Naive thymus-derived CD4-positive, alpha-beta T cell (primary cell): ENCODE measurements at regions of chr12 and their contacts with region 1.

Region 1: DNA sequence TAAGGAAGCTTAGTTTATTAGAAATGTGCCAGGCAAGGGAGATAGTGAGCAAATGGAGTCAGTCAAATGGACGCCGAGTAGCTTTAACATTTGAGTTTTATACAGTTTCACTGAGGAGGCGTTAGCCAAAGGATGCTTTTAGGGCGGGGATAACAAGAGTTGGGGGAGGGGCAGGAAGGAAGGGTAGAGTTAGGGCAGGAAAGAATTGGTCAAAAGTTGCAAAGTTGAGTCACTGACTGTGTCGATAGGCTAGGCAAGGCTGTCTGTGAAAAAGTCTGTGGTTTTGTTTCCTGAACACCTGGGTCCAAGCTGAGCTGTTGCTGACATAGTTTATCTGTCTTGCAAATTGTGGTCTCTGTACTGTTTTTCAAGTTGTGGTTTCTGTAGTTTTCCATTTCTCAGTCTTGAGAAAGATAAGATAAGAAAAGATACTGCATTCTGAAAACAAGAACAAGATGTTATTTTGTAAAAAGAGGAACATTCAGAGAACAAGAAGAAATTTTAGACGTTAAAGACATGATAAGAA is 62.6 kb upstream of the RESF1 start:
- DNase-seq: peak; percentile 35 to 96 (median 92)
- ATAC-seq: peak; percentile 97
- H3K4me3 ChIP-seq: no peak overlapping the region
- H3K4me3 Mint-ChIP-seq: peak overlapping the region; percentile 36 to 92 (median 76)
- H3K27ac ChIP-seq: peak overlapping the region; percentile 86
- H3K27ac Mint-ChIP-seq: peak overlapping the region; percentile 92 to 99 (median 97)
- H3K4me1 ChIP-seq: peaks cover 61% of the 10 kb centered on the region in 2 donors
- H3K4me1 Mint-ChIP-seq: peaks cover 33 to 74% (median 51%) of the 10 kb centered on the region in 7 donors
- H3K27me3 ChIP-seq: no peaks in the 10 kb centered on the region
- H3K27me3 Mint-ChIP-seq: peaks cover 0 to 6% (median 0%) of the 10 kb centered on the region in 5 donors

Region 2: DNA sequence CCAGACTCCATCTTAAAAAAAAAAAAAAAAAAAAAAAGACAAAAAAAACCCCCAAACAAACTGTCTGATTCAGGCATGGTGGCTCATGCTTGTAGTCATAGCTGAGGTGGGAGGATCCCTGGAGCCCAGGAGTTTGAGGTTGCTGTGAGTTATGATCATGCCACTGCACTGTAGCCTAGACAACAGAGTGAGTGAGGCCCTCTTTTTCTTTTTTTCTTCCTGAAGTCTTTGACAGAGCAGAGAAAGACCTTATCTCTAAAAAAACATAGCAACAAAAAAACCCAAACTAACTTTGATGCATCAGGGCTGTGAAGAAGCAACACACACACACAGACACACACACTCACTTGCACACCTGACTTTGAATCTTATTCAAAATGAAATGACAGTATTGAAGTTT is 160.1 kb before region 1 on chr12:
- CTCF ChIA-PET with region 1: no interaction called
- POLR2A ChIA-PET with region 1: interaction called, 4 read pairs
- intact Hi-C with region 1: loop called (anchors 1 kb)
- DNase-seq: peak in 8 of 9 donors; percentile 50 to 92 (median 85)
- ATAC-seq: peak; percentile 96
- H3K4me3 ChIP-seq: no peak overlapping the region
- H3K4me3 Mint-ChIP-seq: peak overlapping the region; percentile 34 to 78 (median 42)
- H3K27ac ChIP-seq: peak overlapping the region; percentile 63
- H3K27ac Mint-ChIP-seq: peak overlapping the region; percentile 78 to 97 (median 91)
- H3K4me1 ChIP-seq: peaks cover 4 to 27% of the 10 kb centered on the region in 2 donors
- H3K4me1 Mint-ChIP-seq: peaks cover 19 to 81% (median 67%) of the 10 kb centered on the region in 7 donors
- H3K27me3 ChIP-seq: no peaks in the 10 kb centered on the region
- H3K27me3 Mint-ChIP-seq: no peaks in the 10 kb centered on the region

Region 3: DNA sequence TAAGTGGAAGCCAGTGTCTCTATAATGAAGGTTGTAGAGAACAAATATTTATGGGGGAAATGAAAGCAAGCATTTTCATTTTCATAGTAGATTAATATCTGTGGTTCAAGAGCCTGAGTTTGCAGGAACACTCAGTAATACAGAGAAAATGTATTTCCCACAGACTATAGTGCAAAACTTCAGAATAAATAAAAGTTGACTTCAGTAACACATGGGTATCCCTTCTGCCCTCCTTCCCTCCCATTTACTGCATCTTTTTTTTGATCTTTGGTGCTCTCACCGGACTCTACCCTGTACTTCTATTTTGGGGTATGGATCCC is 92.4 kb before region 1 on chr12:
- CTCF ChIA-PET with region 1: no interaction called
- POLR2A ChIA-PET with region 1: interaction called, 5 read pairs
- intact Hi-C with region 1: loop called in 1 of 2 experiments (anchors 5 kb)
- DNase-seq: no peak
- ATAC-seq: no peak
- H3K4me3 ChIP-seq: peak overlapping the region; percentile 32
- H3K4me3 Mint-ChIP-seq: peak overlapping the region; percentile 33 to 91 (median 82)
- H3K27ac ChIP-seq: no peak overlapping the region
- H3K27ac Mint-ChIP-seq: peak overlapping the region; percentile 58 to 95 (median 88)
- H3K4me1 ChIP-seq: peaks cover 0 to 41% of the 10 kb centered on the region in 2 donors
- H3K4me1 Mint-ChIP-seq: peaks cover 26 to 67% (median 61%) of the 10 kb centered on the region in 7 donors
- H3K27me3 ChIP-seq: no peaks in the 10 kb centered on the region
- H3K27me3 Mint-ChIP-seq: no peaks in the 10 kb centered on the region

Region 4: DNA sequence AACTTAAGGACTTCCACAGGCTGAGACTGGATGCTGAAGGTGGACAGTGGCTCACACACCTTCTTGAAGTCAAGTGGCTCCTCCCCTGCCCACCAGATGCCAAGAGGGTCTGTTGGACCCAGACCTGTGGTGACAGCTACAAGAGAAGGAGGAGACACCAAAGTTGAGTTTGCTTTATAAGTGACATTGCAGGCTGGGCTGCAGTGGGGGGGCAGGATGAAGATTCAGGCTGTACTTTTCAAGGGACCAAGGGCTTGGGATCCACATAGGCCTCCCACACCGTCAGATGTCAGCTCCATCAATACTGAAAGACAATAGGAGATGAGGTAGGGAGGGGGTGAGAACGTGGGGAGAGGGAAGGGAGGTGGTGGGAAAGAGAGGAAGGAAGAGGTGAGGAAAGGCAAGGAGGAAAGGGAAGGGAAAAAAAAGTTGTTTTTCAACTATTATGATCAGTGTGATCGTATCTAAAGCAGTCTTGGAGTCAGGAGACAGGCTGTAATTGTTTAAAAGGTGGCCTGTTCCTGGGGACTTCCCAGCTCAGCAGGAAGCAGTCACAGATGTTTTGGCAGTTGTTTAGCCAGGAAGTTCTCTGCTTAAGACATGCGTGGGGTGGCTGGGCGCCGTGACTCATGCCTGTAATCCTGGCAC is 21.5 kb before region 1 on chr12:
- CTCF ChIA-PET with region 1: interaction called, 3 read pairs
- POLR2A ChIA-PET with region 1: interaction called, 22 read pairs
- intact Hi-C with region 1: loop called (anchors 1 kb)
- DNase-seq: peak; percentile 17 to 84 (median 63)
- ATAC-seq: peak; percentile 96
- H3K4me3 ChIP-seq: no peak overlapping the region
- H3K4me3 Mint-ChIP-seq: peak overlapping the region; percentile 53 to 84 (median 72)
- H3K27ac ChIP-seq: peak overlapping the region; percentile 90
- H3K27ac Mint-ChIP-seq: peak overlapping the region; percentile 95 to 100 (median 98)
- H3K4me1 ChIP-seq: peaks cover 12 to 29% of the 10 kb centered on the region in 2 donors
- H3K4me1 Mint-ChIP-seq: peaks cover 29 to 66% (median 55%) of the 10 kb centered on the region in 7 donors
- H3K27me3 ChIP-seq: no peaks in the 10 kb centered on the region
- H3K27me3 Mint-ChIP-seq: no peaks in the 10 kb centered on the region

Region 5: DNA sequence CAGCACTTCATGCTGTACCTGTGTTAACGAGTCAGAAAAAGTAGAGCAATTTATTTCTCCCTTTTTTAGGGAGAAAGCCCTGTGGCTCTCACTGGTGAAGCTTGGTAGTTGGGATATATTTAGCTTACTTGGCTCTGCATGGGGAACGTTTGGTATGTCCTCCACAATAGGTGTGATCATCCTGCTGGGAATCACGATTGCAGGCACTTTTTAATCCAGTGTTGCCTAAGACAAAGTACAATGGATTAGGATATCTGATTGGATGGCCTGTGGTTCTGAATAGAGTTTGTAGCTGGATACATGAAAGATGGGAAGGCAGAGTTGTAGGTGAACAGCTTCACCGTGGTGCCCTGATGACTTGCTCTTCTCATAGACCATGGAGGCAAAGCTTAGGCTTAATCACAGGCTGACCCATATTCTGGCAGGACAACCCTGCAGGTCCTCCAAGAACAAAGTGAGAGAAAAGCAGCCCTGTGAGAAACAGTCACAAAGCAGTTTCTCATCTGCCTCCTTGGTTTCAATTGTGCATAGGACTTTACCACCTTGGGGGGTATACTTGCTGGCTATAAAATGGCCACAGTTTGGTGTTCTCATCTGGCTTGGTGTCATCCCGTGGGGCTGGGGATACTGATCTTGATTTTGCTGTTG is 70.1 kb after region 1 on chr12:
- CTCF ChIA-PET with region 1: interaction called, 7 read pairs
- POLR2A ChIA-PET with region 1: interaction called, 103 read pairs
- intact Hi-C with region 1: no loop called
- DNase-seq: no peak
- ATAC-seq: peak; percentile 17
- H3K4me3 ChIP-seq: peak overlapping the region; percentile 35
- H3K4me3 Mint-ChIP-seq: peak overlapping the region; percentile 65 to 97 (median 94)
- H3K27ac ChIP-seq: peak overlapping the region; percentile 47
- H3K27ac Mint-ChIP-seq: peak overlapping the region; percentile 63 to 98 (median 91)
- H3K4me1 ChIP-seq: peaks cover 53 to 69% of the 10 kb centered on the region in 2 donors
- H3K4me1 Mint-ChIP-seq: peaks cover 61 to 89% (median 79%) of the 10 kb centered on the region in 7 donors
- H3K27me3 ChIP-seq: no peaks in the 10 kb centered on the region
- H3K27me3 Mint-ChIP-seq: no peaks in the 10 kb centered on the region